ENCODE measurements at regions of chr22 and their contacts with region 1.

Region 1: GRCh38 chr22:49936018-49936952 is 17.9 kb downstream of the CRELD2 start:
- DNase-seq: peak; percentile 93
- ATAC-seq: peak; percentile 55
- H3K4me3 ChIP-seq: peak overlapping the region; percentile 13 to 57 (median 38); a peak in 4 of 6 replicates
- H3K27ac ChIP-seq: peak overlapping the region; percentile 80
- H3K4me1 ChIP-seq: peaks cover 83% of the 10 kb centered on the region
- H3K27me3 ChIP-seq: no peaks in the 10 kb centered on the region; a peak in 1 of 5 replicates
- CTCF ChIP-seq: peak; percentile 20; the same call in 1 of the 2 replicates
- EP300 ChIP-seq: peak in 1 of 2 experiments; percentile 78; a peak in 2 of 4 replicates
- POLR2A ChIP-seq: no peak
- RAD21 ChIP-seq: peak; percentile 42; the same call in 1 of the 2 replicates

Region 2: GRCh38 chr22:49951000-49951677 is 14.9 kb after region 1 on chr22:
- CTCF ChIA-PET with region 1: no interaction called
- POLR2A ChIA-PET with region 1: interaction called, 283 read pairs
- in situ Hi-C with region 1: no loop called
- intact Hi-C with region 1: loop called (anchors 1 kb)
- DNase-seq: no peak
- ATAC-seq: no peak
- H3K4me3 ChIP-seq: peak overlapping the region; percentile 54 to 77 (median 56); a peak in 5 of 6 replicates
- H3K27ac ChIP-seq: peak overlapping the region; percentile 68
- H3K4me1 ChIP-seq: peaks cover 95% of the 10 kb centered on the region
- H3K27me3 ChIP-seq: no peaks in the 10 kb centered on the region
- CTCF ChIP-seq: no peak
- EP300 ChIP-seq: no peak
- POLR2A ChIP-seq: no peak
- RAD21 ChIP-seq: no peak

Region 3: GRCh38 chr22:49960159-49961004 is 24.1 kb after region 1 on chr22 and contains the start of gene PIM3:
- CTCF ChIA-PET with region 1: interaction called, 4 read pairs
- POLR2A ChIA-PET with region 1: interaction called, 283 read pairs
- in situ Hi-C with region 1: loop called (anchors 5 kb)
- intact Hi-C with region 1: loop called (anchors 2 kb)
- DNase-seq: peak; percentile 94
- ATAC-seq: peak; percentile 67
- H3K4me3 ChIP-seq: peak within 1 kb of the TSS; percentile 97 to 99 (median 97)
- H3K27ac ChIP-seq: peak within 1 kb of the TSS; percentile 87
- H3K4me1 ChIP-seq: peaks cover 75% of the 10 kb centered on the region
- H3K27me3 ChIP-seq: no peaks in the 10 kb centered on the region; a peak in 1 of 5 replicates
- CTCF ChIP-seq: 0 out of 2 replicates have a peak, but pooled peaks have one; percentile 14
- EP300 ChIP-seq: no peak
- POLR2A ChIP-seq: peak in 1 of 2 experiments; percentile 88; a peak in 2 of 4 replicates
- RAD21 ChIP-seq: peak; percentile 60; the same call in 1 of the 2 replicates
- total RNA-seq, gene PIM3: 18.2 and 31.2 TPM in 2 replicates

Region 4: GRCh38 chr22:49970528-49971231 is 34.4 kb after region 1 on chr22:
- CTCF ChIA-PET with region 1: no interaction called
- POLR2A ChIA-PET with region 1: interaction called, 59 read pairs
- in situ Hi-C with region 1: loop called (anchors 5 kb)
- intact Hi-C with region 1: loop called (anchors 5 kb)
- DNase-seq: peak; percentile 97
- ATAC-seq: peak; percentile 54
- H3K4me3 ChIP-seq: peak overlapping the region; percentile 55 to 71 (median 58); a peak in 5 of 6 replicates
- H3K27ac ChIP-seq: peak overlapping the region; percentile 57
- H3K4me1 ChIP-seq: peaks cover 76% of the 10 kb centered on the region
- H3K27me3 ChIP-seq: no peaks in the 10 kb centered on the region
- CTCF ChIP-seq: peak; percentile 47
- EP300 ChIP-seq: peak; percentile 42 to 87; a peak in 3 of 4 replicates
- POLR2A ChIP-seq: peak in 1 of 2 experiments; percentile 59; a peak in 2 of 4 replicates
- RAD21 ChIP-seq: peak; percentile 9

Measured in HepG2 (cell line).